PC-9 (cell line): ENCODE measurements at regions of chr3 and their contacts with region 1.

Region 1: GRCh38 chr3:111717601-111718000 is 122.5 kb upstream of the ZBED2 start:
- DNase-seq: peak; percentile 84 to 98
- H3K4me3 ChIP-seq: no peak overlapping the region
- H3K27ac ChIP-seq: peak overlapping the region; percentile 34
- H3K4me1 ChIP-seq: peaks cover 25% of the 10 kb centered on the region
- H3K27me3 ChIP-seq: no peaks in the 10 kb centered on the region
- CTCF ChIP-seq: peak; percentile 100

Region 2: GRCh38 chr3:111621535-111621934 is 96.1 kb before region 1 on chr3:
- CTCF ChIA-PET with region 1: no interaction called
- POLR2A ChIA-PET with region 1: no interaction called
- intact Hi-C with region 1: no loop called
- DNase-seq: peak in 1 of 2 experiments; percentile 5
- H3K4me3 ChIP-seq: no peak overlapping the region
- H3K27ac ChIP-seq: no peak overlapping the region
- H3K4me1 ChIP-seq: no peaks in the 10 kb centered on the region
- H3K27me3 ChIP-seq: no peaks in the 10 kb centered on the region
- CTCF ChIP-seq: peak; percentile 56; the same call in 1 of the 2 replicates

Region 3: GRCh38 chr3:111668912-111669488 is 48.6 kb before region 1 on chr3:
- CTCF ChIA-PET with region 1: interaction called, 35 read pairs
- POLR2A ChIA-PET with region 1: interaction called, 7 read pairs
- intact Hi-C with region 1: loop called (anchors 1 kb)
- DNase-seq: peak; percentile 16 to 78
- H3K4me3 ChIP-seq: no peak overlapping the region
- H3K27ac ChIP-seq: no peak overlapping the region
- H3K4me1 ChIP-seq: peaks cover 25% of the 10 kb centered on the region
- H3K27me3 ChIP-seq: no peaks in the 10 kb centered on the region
- CTCF ChIP-seq: peak; percentile 98

Region 4: DNA sequence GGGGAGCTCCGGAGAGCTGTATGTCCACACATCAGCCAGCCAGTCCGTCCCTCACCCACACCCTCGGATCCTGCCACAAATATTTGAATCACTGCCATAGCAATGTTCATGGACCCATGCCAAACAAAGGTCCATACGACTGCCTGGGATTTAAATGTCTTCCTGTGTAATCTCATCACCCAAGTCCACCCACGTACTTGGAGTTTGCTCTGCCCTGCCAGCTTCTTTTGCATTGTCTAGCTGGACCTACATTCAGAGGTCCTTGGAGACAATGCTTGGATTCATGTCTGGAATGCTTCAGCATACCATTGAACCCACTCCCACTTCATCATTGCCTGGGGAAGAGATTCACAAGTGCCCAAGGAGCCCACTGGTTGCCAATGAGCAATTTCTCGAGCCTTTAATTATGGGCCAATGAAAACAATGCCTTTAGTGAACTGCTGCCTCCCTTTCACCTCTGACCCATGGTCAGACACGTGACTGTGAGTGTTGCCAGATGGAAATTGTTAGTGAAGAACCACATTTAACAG is 51.0 kb after region 1 on chr3:
- CTCF ChIA-PET with region 1: no interaction called
- POLR2A ChIA-PET with region 1: no interaction called
- intact Hi-C with region 1: loop called (anchors 2 kb)
- DNase-seq: peak in 1 of 2 experiments; percentile 54
- H3K4me3 ChIP-seq: no peak overlapping the region
- H3K27ac ChIP-seq: no peak overlapping the region
- H3K4me1 ChIP-seq: peaks cover 10% of the 10 kb centered on the region; the same call in 1 of the 2 replicates
- H3K27me3 ChIP-seq: no peaks in the 10 kb centered on the region
- CTCF ChIP-seq: no peak

Region 5: DNA sequence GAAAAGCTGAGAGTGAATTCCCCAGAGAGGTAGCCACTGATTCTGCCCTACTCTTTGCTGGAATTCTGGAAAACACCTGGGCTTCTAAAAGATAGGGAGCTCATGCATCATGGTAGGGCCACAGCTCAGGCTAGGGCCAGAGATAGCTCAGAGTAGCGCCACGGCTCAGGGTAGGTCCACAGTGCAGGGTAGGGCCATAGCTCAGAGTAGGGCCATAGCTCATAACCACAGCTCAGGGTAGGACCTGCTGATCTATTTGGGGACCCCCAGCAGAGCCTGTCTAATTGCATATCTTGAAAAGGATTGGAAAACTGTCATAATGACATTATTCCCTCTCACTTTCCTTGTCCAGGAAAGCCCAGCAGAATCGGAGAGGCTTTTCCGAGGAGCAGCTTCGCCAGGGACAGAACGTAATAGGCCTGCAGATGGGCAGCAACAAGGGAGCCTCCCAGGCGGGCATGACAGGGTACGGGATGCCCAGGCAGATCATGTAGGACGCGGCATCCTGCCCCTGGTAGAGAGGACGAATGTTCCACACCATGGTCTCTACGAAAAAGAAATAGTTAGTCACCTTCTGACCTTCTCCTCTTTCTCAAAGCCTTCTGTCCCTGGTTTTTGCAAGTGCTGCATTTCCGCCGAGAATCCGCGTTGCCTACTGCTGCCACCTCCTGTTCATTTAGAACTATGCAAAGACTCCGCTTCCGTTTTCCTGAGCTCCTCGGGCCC is 295.6 kb after region 1 on chr3:
- CTCF ChIA-PET with region 1: interaction called, 4 read pairs
- POLR2A ChIA-PET with region 1: no interaction called
- intact Hi-C with region 1: loop called (anchors 1 kb)
- DNase-seq: peak; percentile 48 to 64
- H3K4me3 ChIP-seq: no peak overlapping the region
- H3K27ac ChIP-seq: no peak overlapping the region
- H3K4me1 ChIP-seq: no peaks in the 10 kb centered on the region
- H3K27me3 ChIP-seq: no peaks in the 10 kb centered on the region
- CTCF ChIP-seq: peak; percentile 90

Region 6: GRCh38 chr3:112561731-112562688 is 844.4 kb after region 1 on chr3 and contains the starts of genes ATG3 and SLC35A5:
- CTCF ChIA-PET with region 1: no interaction called
- POLR2A ChIA-PET with region 1: interaction called, 15 read pairs
- intact Hi-C with region 1: no loop called
- DNase-seq: peak; percentile 94 to 99
- H3K4me3 ChIP-seq: peak within 1 kb of the TSS; percentile 93
- H3K27ac ChIP-seq: peak within 1 kb of the TSS; percentile 88
- H3K4me1 ChIP-seq: peaks cover 25% of the 10 kb centered on the region
- H3K27me3 ChIP-seq: no peaks in the 10 kb centered on the region
- CTCF ChIP-seq: peak; percentile 14; the same call in 1 of the 2 replicates
- total RNA-seq, gene ATG3: 66.8 and 68.9 TPM in 2 replicates
- total RNA-seq, gene SLC35A5: 24.2 and 35.7 TPM in 2 replicates